Psoas muscle (tissue), 8 donors: ENCODE measurements at regions of chr19 and their contacts with region 1.

Region 1: DNA sequence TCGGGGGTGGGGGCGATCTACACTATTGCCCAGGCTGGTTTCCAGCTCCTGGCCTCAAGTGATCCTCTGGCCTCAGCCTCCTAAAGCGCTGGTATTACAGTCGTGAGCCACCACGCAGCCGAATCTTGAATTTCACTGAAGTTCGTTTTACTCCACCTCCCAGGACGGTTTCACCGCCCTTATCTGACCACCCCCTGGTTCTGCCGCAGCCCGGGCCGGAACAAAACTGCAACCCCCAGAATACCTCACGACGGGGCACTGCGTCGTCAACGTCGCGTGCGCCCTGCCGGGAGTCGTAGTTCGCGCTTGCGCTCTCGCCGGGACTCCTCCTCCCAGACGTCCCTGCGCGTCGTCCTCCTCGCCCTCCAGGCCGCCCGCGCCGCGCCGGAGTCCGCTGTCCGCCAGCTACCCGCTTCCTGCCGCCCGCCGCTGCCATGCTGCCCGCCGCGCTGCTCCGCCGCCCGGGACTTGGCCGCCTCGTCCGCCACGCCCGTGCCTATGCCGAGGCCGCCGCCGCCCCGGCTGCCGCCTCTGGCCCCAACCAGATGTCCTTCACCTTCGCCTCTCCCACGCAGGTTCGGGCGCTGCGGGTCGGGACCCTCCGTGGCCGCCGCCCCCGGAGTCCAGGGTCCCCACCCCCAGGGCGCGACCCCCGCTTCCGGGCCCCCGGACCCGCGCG is at the start of gene ATP5F1D:
- DNase-seq: peak; percentile 94 to 98
- ATAC-seq: peak; percentile 41 to 61 (median 48)
- H3K4me3 ChIP-seq: peak within 1 kb of the TSS; percentile 75
- H3K27ac ChIP-seq: peak within 1 kb of the TSS; percentile 99
- H3K4me1 ChIP-seq: peaks cover 55% of the 10 kb centered on the region
- H3K27me3 ChIP-seq: peaks cover 0 to 3% (median 0%) of the 10 kb centered on the region in 3 donors
- CTCF ChIP-seq: no peak
- total RNA-seq, gene ATP5F1D: 362 to 759 (median 472) TPM

Region 2: GRCh38 chr19:1113033-1113985 is 128.2 kb before region 1 on chr19:
- intact Hi-C with region 1: loop called in 1 of 2 experiments (anchors 5 kb)
- DNase-seq: peak; percentile 97 to 99
- ATAC-seq: peak; percentile 86 to 94 (median 90)
- H3K4me3 ChIP-seq: peak overlapping the region; percentile 33
- H3K27ac ChIP-seq: peak overlapping the region; percentile 80
- H3K4me1 ChIP-seq: no peaks in the 10 kb centered on the region
- H3K27me3 ChIP-seq: no peaks in the 10 kb centered on the region
- CTCF ChIP-seq: peak; percentile 93

Region 3: GRCh38 chr19:1205114-1206062 is 36.2 kb before region 1 on chr19 and contains the start of gene STK11:
- intact Hi-C with region 1: no loop called
- DNase-seq: peak; percentile 100
- ATAC-seq: peak; percentile 89 to 92 (median 91)
- H3K4me3 ChIP-seq: peak within 1 kb of the TSS; percentile 92
- H3K27ac ChIP-seq: peak within 1 kb of the TSS; percentile 99
- H3K4me1 ChIP-seq: peaks cover 30% of the 10 kb centered on the region
- H3K27me3 ChIP-seq: no peaks in the 10 kb centered on the region
- CTCF ChIP-seq: no peak
- total RNA-seq, gene STK11: 83.5 to 95.0 (median 88.3) TPM

Region 4: GRCh38 chr19:1221141-1221903 is 20.2 kb before region 1 on chr19:
- intact Hi-C with region 1: loop called (anchors 1 to 2 kb)
- DNase-seq: peak; percentile 81 to 94
- ATAC-seq: peak; percentile 68 to 80 (median 73)
- H3K4me3 ChIP-seq: no peak overlapping the region
- H3K27ac ChIP-seq: peak overlapping the region; percentile 99
- H3K4me1 ChIP-seq: peaks cover 65% of the 10 kb centered on the region
- H3K27me3 ChIP-seq: no peaks in the 10 kb centered on the region
- CTCF ChIP-seq: peak; percentile 84

Region 5: GRCh38 chr19:1266116-1266915 is 24.8 kb after region 1 on chr19:
- intact Hi-C with region 1: loop called (anchors 1 to 2 kb)
- DNase-seq: peak; percentile 91 to 93
- ATAC-seq: peak; percentile 13 to 49 (median 33)
- H3K4me3 ChIP-seq: peak overlapping the region; percentile 69
- H3K27ac ChIP-seq: peak overlapping the region; percentile 85
- H3K4me1 ChIP-seq: peaks cover 49% of the 10 kb centered on the region
- H3K27me3 ChIP-seq: no peaks in the 10 kb centered on the region
- CTCF ChIP-seq: no peak